Activated naive CD4-positive, alpha-beta T cell treated with anti-CD3 and anti-CD28 coated beads for 36 hours (primary cell): ENCODE measurements at regions of chr6 and their contacts with region 1.

Region 1: DNA sequence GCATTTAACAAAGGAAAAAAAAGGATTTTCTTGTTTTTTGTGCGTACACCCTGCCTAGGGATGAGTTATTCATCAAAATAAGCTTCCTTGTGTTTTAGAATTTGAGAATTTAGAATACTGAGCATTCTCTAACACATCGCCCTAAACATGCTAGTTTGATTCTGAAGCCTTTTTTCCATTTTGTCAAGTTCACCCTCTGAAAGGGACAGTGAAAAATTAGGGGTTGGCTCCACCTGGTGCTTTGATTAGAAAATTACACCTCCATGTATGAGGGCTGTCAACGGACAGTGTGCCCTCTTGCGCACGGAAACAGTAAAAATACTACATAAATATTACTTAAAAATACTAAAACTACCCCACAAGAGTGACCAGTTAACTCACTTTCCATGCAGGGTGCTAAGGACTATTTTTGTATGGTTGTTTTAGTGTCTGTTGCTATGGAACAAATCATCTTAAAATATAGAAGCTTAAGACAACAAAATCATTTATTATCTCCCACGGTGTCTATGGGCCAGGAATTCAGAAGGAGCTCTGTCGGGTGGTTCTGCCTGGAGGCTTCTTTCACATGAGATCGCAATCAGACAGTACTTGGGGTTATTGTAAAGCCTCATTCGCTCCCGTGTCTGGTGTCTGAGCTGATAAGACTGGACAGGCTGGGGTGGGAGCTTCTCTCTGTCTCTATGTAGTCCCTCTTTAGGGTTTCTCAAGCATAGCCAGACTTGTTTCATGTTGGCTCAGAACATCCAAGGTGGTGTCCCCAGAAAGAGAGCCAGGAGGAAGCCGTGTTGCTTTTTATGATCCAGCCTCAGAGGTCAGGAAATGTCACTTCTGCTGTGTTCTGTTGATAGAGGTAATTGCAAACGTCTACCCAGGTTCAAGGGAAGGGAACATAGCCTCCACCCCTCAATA is 41.1 kb upstream of the TMEM170B start:
- DNase-seq: peak; percentile 87
- H3K4me3 Mint-ChIP-seq: no peak overlapping the region
- H3K27ac Mint-ChIP-seq: no peak overlapping the region
- H3K4me1 Mint-ChIP-seq: peaks cover 13% of the 10 kb centered on the region
- H3K27me3 Mint-ChIP-seq: no peaks in the 10 kb centered on the region

Region 2: DNA sequence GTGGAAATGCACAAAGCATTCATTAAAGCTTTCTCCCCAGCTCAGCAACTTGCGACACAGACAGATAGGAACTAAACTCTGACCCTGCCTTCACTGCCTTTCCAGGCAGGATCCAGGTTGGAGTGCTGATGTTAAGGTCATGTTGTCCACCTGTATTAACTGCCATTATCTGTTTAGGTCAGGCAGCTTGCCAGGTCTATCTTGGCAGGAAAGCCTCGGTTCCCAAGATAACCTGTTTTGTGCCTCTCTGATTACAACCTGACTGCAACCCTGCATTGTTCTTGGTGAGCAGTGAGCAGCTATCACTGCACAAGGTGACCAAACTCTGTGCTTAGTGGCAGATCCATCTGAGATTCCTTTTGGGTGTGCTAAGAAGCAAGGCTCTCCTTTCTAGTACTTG is 429.1 kb before region 1 on chr6:
- CTCF ChIA-PET with region 1: interaction called, 8 read pairs
- intact Hi-C with region 1: loop called (anchors 1 kb)
- DNase-seq: no peak
- H3K4me3 Mint-ChIP-seq: no peak overlapping the region
- H3K27ac Mint-ChIP-seq: no peak overlapping the region
- H3K4me1 Mint-ChIP-seq: no peaks in the 10 kb centered on the region
- H3K27me3 Mint-ChIP-seq: peaks cover 3% of the 10 kb centered on the region

Region 3: DNA sequence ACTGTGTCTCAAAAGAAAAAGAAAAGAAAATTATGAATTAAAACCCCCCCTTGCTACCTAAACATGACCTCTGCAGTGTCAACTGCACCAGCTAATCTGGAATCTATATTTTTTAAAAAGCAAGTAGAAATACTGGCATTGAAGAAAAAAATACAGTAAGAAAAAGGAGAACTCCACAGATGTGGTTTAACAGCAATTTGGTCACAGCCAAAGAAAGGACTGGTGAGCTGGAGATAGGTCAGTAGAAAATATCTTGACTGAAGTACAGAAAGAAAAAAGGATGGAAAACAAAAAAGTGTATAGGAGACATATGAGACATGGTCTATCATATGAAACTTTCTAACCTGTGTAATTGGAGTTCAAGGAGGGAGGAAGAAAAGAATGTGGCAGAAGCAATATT is 340.8 kb before region 1 on chr6:
- CTCF ChIA-PET with region 1: interaction called, 30 read pairs
- intact Hi-C with region 1: no loop called
- DNase-seq: no peak
- H3K4me3 Mint-ChIP-seq: no peak overlapping the region
- H3K27ac Mint-ChIP-seq: no peak overlapping the region
- H3K4me1 Mint-ChIP-seq: peaks cover 6% of the 10 kb centered on the region
- H3K27me3 Mint-ChIP-seq: no peaks in the 10 kb centered on the region

Region 4: DNA sequence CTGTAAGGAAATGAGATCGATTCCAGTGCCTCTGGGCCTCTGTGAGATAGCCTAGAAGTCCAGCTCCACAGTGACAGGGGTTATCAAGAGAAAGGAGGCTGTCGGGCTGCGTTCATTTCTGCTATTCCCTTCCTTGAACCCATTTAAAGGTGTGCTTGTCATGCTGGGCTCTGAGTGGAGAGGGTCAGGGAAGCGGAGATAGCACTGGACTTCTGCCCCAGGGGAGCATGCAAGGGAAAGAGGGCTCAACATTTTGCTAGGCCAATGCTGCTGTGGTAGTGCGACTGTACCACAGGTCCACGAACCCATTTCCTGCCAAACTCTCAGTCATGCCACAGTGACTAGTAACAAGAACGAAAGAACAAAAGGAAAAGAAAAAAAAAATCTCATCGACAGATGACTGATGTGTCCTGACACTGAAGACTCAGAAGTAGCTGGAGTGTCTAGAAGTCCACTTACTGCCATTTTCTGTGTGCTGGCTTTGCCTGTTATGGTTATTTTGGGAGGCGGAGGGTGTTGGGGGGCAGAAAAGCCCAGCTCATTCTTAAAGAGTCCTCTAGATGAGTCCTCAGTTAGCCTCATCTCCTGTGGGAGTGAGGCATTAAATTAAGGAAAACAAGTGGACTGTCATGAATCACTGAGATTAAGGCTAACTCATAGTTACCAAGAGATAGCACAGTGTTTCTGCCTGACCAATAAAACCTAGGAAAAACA is 272.0 kb before region 1 on chr6:
- CTCF ChIA-PET with region 1: interaction called, 11 read pairs
- intact Hi-C with region 1: no loop called
- DNase-seq: peak; percentile 63
- H3K4me3 Mint-ChIP-seq: no peak overlapping the region
- H3K27ac Mint-ChIP-seq: peak overlapping the region; percentile 46
- H3K4me1 Mint-ChIP-seq: peaks cover 28% of the 10 kb centered on the region
- H3K27me3 Mint-ChIP-seq: no peaks in the 10 kb centered on the region

Region 5: GRCh38 chr6:11353921-11354389 is 142.5 kb before region 1 on chr6:
- CTCF ChIA-PET with region 1: interaction called, 12 read pairs
- intact Hi-C with region 1: no loop called
- DNase-seq: peak; percentile 93
- H3K4me3 Mint-ChIP-seq: peak overlapping the region; percentile 54
- H3K27ac Mint-ChIP-seq: peak overlapping the region; percentile 96
- H3K4me1 Mint-ChIP-seq: peaks cover 82% of the 10 kb centered on the region
- H3K27me3 Mint-ChIP-seq: no peaks in the 10 kb centered on the region

Region 6: GRCh38 chr6:11485271-11485670 is 11.1 kb before region 1 on chr6:
- CTCF ChIA-PET with region 1: interaction called, 16 read pairs
- intact Hi-C with region 1: no loop called
- DNase-seq: no peak
- H3K4me3 Mint-ChIP-seq: no peak overlapping the region
- H3K27ac Mint-ChIP-seq: no peak overlapping the region
- H3K4me1 Mint-ChIP-seq: no peaks in the 10 kb centered on the region
- H3K27me3 Mint-ChIP-seq: no peaks in the 10 kb centered on the region